ENCODE measurements at regions of chr3 and their contacts with region 1.

Region 1: DNA sequence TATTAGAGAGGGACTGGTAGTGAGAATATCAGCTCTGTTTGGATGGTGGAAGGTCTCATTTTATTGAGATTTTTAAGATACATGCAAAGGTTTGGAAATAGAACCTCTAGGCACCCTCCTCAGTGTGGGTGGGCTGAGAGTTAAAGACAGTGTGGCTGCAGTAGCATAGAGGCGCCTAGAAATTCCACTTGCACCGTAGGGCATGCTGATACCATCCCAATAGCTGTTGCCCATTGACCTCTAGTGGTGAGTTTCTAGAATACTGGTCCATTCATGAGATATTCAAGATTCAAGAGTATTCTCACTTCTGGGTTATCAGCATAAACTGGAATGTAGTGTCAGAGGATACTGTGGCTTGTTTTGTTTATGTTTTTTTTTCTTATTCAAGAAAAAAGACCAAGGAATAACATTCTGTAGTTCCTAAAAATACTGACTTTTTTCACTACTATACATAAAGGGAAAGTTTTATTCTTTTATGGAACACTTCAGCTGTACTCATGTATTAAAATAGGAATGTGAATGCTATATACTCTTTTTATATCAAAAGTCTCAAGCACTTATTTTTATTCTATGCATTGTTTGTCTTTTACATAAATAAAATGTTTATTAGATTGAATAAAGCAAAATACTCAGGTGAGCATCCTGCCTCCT is 87.2 kb downstream of the TGFBR2 start:
- DNase-seq: peak; percentile 63 to 77
- ATAC-seq: peak; percentile 91 to 92
- H3K4me3 ChIP-seq: no peak overlapping the region
- H3K27ac ChIP-seq: peak overlapping the region; percentile 59 to 77
- H3K4me1 ChIP-seq: peaks cover 42% of the 10 kb centered on the region
- CTCF ChIP-seq: peak; percentile 95
- EP300 ChIP-seq: no peak
- POLR2A ChIP-seq: no peak
- RAD21 ChIP-seq: peak; percentile 99

Region 2: DNA sequence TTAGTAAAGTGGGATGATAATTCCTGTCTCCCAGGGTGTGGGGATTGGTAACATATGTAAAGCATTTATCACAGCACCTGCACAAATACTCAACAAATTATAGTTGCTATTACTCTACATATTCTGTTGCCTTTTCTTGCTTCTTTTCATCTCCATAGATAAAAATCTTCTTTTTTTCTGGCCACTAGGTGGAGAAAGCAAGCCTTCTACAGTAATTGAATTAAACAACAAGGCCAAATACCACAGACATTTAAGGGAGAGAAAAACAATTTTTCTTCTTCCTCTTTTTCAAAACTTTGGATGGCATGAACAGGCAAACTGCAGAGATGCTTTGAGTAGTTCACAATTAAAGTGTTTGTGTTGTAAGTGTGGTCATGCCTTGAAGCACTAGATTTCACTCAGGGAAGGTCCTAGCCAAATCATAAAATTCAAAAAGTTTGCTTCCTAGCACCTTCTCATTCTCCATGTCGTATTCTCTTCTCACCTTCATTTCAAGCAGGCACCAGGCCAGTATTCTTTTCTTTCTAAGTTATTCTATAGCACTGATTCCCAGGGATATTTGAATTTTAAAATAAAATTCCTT is 580.6 kb before region 1 on chr3:
- CTCF ChIA-PET with region 1: interaction called, 25 read pairs
- POLR2A ChIA-PET with region 1: no interaction called
- DNase-seq: peak; percentile 6 to 54
- ATAC-seq: peak; percentile 59 to 65; a peak in 3 of 6 replicates
- H3K4me3 ChIP-seq: no peak overlapping the region
- H3K27ac ChIP-seq: peak overlapping the region; percentile 54 to 71
- H3K4me1 ChIP-seq: peaks cover 9% of the 10 kb centered on the region; the same call in 1 of the 3 replicates
- CTCF ChIP-seq: peak; percentile 81
- EP300 ChIP-seq: no peak
- POLR2A ChIP-seq: no peak
- RAD21 ChIP-seq: peak; percentile 86 to 96

Region 3: DNA sequence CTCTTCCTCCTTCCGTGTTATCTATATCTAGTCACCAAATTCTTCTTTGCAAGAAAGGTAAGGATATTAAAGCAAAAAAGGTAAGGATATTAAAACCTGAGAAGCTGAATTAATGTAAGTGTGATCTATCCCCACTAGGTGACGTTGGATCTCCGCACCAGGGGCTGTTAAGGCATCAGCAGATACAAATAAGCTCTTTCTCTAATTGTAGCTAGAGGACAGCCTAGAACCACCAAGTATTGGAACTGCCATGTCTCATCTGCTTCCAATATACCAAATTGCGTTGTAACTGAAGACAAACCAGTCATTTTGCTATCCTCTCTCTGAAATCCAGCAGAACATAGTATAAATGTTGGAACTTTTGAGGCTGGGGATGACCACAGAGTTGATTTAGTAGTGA is 558.4 kb before region 1 on chr3:
- CTCF ChIA-PET with region 1: interaction called, 16 read pairs
- POLR2A ChIA-PET with region 1: no interaction called
- DNase-seq: peak; percentile 4 to 63
- ATAC-seq: peak; percentile 76 to 78; a peak in 5 of 6 replicates
- H3K4me3 ChIP-seq: no peak overlapping the region
- H3K27ac ChIP-seq: peak overlapping the region; percentile 42 to 48; a peak in 1 of 6 replicates
- H3K4me1 ChIP-seq: no peaks in the 10 kb centered on the region
- CTCF ChIP-seq: peak; percentile 66
- EP300 ChIP-seq: no peak
- POLR2A ChIP-seq: no peak
- RAD21 ChIP-seq: peak; percentile 85 to 86

Region 4: DNA sequence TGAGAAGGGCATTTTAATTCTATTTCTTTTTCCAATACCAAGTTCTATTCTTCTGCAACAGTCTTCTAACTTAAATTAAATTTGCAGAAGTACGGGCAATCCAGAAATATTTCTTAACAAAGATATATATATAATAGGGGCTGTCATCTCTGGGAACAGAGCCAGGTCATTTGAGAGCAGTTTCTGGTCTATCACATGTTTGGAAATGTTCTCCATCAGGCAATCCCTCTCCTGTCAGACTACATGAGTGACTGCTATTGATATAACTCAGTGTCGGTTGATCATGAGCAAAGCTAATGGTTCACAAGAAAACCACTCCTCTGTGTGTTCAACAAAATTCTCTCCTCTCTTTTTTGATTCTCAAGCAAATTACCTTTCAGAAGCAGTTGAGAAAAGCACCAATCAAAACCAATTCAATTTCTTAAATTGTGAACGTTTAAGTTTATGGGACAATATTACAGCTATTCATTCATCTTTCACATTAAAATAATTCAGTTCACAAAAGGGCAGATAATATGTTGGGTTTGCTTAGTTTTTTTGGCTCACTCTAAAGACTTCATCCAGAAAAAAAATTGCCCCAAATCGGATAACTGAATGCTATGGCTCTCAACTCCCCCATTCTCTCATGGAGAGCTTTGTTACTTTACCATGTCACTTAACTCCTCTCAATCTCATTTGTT is 240.1 kb before region 1 on chr3:
- CTCF ChIA-PET with region 1: no interaction called
- POLR2A ChIA-PET with region 1: no interaction called
- DNase-seq: no peak
- ATAC-seq: no peak
- H3K4me3 ChIP-seq: no peak overlapping the region
- H3K27ac ChIP-seq: no peak overlapping the region
- H3K4me1 ChIP-seq: no peaks in the 10 kb centered on the region
- CTCF ChIP-seq: no peak
- EP300 ChIP-seq: no peak
- POLR2A ChIP-seq: no peak
- RAD21 ChIP-seq: no peak

Region 5: DNA sequence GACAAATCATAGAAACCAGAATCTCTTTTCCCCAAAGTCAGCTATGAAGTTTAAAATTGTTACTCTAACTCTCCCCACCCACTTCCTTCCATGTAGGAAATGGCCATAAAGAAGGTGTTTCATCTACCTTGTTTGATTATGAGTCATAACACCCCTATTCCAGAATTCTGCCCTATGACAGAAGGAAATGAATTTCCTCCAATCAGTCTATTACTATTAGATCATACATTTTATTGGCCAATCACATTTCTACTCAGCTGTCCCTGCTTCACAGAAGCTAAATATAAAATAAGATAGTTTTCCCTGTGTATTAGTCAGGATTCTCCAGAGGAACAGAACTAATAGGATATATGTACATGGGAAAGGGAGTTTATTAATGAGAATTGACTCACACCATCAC is 14.9 kb after region 1 on chr3:
- CTCF ChIA-PET with region 1: interaction called, 26 read pairs
- POLR2A ChIA-PET with region 1: no interaction called
- DNase-seq: no peak
- ATAC-seq: no peak
- H3K4me3 ChIP-seq: no peak overlapping the region
- H3K27ac ChIP-seq: no peak overlapping the region
- H3K4me1 ChIP-seq: no peaks in the 10 kb centered on the region
- CTCF ChIP-seq: no peak
- EP300 ChIP-seq: no peak
- POLR2A ChIP-seq: no peak
- RAD21 ChIP-seq: no peak

Region 6: DNA sequence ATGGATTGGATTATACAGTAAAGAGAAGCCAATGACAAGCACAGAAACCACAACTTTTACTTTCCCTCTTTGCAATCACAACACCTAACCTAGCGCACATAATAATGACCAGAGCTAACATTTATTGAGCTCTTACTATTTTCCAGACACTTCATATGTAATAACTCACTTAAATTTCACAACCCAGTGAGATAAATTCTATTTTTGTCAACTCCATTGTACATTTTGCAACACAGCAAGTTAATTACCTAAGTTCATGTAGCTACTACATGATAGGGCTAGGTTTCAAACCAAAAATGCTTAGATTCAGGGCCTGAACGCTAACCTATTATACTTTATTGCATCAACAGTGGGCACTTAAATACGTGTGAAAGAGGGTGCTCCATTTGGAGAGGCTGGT is 111.4 kb after region 1 on chr3:
- CTCF ChIA-PET with region 1: no interaction called
- POLR2A ChIA-PET with region 1: no interaction called
- DNase-seq: no peak
- ATAC-seq: no peak
- H3K4me3 ChIP-seq: no peak overlapping the region
- H3K27ac ChIP-seq: no peak overlapping the region
- H3K4me1 ChIP-seq: no peaks in the 10 kb centered on the region
- CTCF ChIP-seq: no peak
- EP300 ChIP-seq: no peak
- POLR2A ChIP-seq: no peak
- RAD21 ChIP-seq: no peak